Activated CD8-positive, alpha-beta memory T cell treated with anti-CD3 and anti-CD28 coated beads, Interleukin-2, amount 10 ng/mL, durations not matched to agents 7 days and 5 days (primary cell): ENCODE measurements at regions of chr3 and their contacts with region 1.

Region 1: DNA sequence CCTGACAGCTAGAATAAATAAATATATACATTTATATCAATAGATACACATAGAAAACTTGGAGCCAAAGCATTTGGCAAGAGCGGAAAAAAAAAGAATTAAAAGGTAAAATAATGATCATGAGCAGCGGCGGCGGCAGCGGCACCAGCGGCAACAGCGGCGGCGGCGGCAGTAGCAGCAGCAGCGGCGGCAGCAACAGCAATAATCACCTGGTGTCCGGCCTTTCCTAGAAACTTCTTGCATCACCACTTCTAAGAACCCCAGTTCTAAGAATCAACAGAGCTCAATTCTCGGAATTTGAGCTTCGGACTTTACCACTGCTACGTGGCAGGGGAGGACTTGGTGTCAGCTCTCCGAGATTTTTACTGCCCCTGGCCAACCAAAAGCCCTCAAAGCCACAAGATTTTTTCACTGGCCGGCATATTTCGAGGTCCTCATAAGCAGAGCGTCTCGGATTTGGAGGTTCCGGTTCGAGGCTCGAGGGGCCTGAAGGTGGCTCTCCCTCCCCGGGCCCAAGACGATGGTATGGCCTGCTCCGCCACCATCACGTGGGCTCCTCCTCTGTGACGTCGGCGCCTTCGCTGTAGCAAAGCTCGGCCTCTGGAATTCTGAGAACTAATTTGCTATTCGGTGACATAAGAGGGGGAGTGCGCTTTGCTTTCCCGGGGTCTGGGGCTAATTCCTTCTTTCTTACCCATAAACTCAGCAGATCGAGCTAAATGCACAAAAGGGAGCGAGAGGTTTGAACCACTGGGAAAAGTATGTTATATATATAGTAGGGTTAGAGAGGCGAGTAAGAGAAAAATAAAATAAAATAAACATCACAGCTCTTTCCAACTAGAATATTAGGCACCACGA is at the start of gene BCL6:
- DNase-seq: peak; percentile 94
- ATAC-seq: peak; percentile 50
- H3K4me3 Mint-ChIP-seq: peak within 1 kb of the TSS; percentile 98
- H3K27ac Mint-ChIP-seq: peak within 1 kb of the TSS; percentile 99
- H3K4me1 Mint-ChIP-seq: peaks cover 52% of the 10 kb centered on the region
- H3K27me3 Mint-ChIP-seq: peaks cover 4% of the 10 kb centered on the region
- total RNA-seq, gene BCL6: 12.1 to 13.2 TPM

Region 2: GRCh38 chr3:187281191-187281714 is 464.2 kb before region 1 on chr3:
- CTCF ChIA-PET with region 1: no interaction called
- DNase-seq: no peak
- ATAC-seq: no peak
- H3K4me3 Mint-ChIP-seq: no peak overlapping the region
- H3K27ac Mint-ChIP-seq: no peak overlapping the region
- H3K4me1 Mint-ChIP-seq: no peaks in the 10 kb centered on the region
- H3K27me3 Mint-ChIP-seq: peaks cover 40% of the 10 kb centered on the region

Region 3: DNA sequence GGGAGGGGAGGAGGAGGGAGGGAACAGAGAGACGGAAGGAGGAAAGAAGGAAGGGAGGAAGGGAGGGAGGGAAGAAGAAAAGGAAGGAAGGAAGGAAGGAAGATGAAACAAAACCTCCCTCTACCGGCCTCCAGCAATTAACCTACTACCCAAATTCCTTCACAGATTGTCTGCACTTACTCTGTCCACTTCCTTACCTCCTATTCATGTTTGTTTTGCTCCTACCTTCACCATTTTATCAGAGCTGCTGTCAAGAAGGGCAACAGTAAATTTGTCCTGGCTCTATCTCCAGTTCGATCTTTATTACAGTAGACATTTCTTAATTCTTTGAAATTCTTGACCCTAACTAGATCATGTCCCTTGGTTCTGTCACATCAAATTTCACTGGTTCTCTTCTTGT is 44.5 kb after region 1 on chr3:
- CTCF ChIA-PET with region 1: no interaction called
- DNase-seq: no peak
- ATAC-seq: no peak
- H3K4me3 Mint-ChIP-seq: no peak overlapping the region
- H3K27ac Mint-ChIP-seq: no peak overlapping the region
- H3K4me1 Mint-ChIP-seq: peaks cover 20% of the 10 kb centered on the region
- H3K27me3 Mint-ChIP-seq: no peaks in the 10 kb centered on the region

Region 4: GRCh38 chr3:187802928-187803259 is 57.5 kb after region 1 on chr3:
- CTCF ChIA-PET with region 1: interaction called, 112 read pairs
- DNase-seq: peak; percentile 93
- ATAC-seq: peak; percentile 76
- H3K4me3 Mint-ChIP-seq: peak overlapping the region; percentile 49
- H3K27ac Mint-ChIP-seq: peak overlapping the region; percentile 100
- H3K4me1 Mint-ChIP-seq: peaks cover 93% of the 10 kb centered on the region
- H3K27me3 Mint-ChIP-seq: no peaks in the 10 kb centered on the region

Region 5: DNA sequence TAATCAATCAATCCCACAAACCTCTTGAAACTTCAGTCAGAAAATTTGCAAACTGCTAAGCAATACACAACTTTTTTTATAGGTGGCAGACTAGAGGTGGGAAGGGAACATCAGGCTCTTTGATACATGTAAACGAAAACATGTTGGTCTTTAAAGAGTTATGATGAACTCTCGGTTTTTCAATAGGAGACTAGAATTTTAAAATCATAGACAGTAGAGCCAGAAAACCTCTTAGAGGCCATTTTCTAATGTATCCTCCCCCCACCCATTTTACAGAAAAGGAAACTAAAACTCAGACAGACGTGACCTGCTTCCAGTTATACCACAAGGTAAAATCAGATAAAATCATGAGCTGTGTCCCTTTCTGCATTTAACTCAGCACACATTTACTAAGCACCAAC is 229.4 kb after region 1 on chr3:
- CTCF ChIA-PET with region 1: interaction called, 37 read pairs
- DNase-seq: no peak
- ATAC-seq: peak; percentile 79
- H3K4me3 Mint-ChIP-seq: peak overlapping the region; percentile 62
- H3K27ac Mint-ChIP-seq: peak overlapping the region; percentile 89
- H3K4me1 Mint-ChIP-seq: peaks cover 59% of the 10 kb centered on the region
- H3K27me3 Mint-ChIP-seq: no peaks in the 10 kb centered on the region

Region 6: DNA sequence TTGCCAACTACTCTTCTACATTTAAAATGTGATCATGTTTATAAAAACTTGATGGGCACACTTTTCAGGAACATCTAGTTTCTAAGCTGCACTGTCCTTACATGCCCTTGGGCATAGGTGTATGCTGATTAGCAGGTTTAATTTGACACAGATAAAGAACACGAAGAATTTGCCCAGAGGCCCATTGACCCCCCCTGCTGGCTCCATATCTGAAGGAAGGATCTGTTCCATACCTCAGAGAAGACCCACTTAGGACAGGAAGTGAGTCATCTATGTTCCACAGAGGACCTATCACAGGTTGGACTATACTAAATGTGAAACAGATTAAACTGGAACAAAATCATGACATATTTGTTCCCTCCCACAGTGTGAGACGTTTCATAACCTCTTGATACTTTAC is 315.7 kb after region 1 on chr3:
- CTCF ChIA-PET with region 1: interaction called, 10 read pairs
- DNase-seq: peak; percentile 79
- ATAC-seq: peak; percentile 96
- H3K4me3 Mint-ChIP-seq: no peak overlapping the region
- H3K27ac Mint-ChIP-seq: peak overlapping the region; percentile 30
- H3K4me1 Mint-ChIP-seq: peaks cover 18% of the 10 kb centered on the region
- H3K27me3 Mint-ChIP-seq: no peaks in the 10 kb centered on the region